A673 (cell line): ENCODE measurements at regions of chr2 and their contacts with region 1.

Region 1: DNA sequence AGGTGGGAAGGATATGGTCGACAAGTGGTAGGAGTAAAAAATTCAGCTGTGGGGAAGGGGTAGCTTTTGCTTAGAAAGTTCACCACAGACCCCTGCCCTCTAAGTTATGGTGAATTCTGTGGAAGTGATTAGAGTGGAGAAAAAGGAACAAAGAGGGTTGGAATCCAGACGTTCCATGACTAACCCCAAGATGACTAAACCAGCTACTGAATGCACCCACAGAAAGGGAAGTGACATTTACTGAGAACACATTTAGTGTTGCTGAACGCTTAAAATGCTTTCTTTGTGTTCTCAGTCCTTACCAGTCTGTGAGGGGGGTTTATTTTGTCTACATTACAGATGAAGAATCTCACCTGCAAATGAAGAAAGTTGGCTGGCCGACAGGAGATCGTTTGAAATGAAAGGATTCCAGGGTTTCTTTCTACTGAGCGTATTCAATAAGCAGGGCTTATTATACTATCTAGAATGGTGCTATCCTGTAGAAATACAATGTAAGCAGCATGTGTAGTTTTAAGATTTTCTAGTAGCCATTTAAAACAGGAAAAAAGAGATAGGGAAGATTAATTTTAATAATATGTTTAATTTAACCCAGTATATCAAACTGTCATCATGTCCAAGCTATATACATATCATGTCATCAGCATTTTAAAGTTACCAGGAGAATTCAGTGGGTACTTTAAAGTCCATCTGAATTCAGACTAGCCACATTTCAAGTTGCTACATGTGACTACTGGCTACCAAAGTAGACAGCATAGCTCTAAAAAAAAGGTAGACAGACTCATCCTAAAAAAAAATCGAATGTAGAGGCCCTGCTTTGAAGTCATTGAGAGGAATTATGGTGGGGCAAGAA is 60.1 kb downstream of the LIMS1 start:
- DNase-seq: peak; percentile 28
- H3K4me3 ChIP-seq: no peak overlapping the region
- H3K27ac ChIP-seq: no peak overlapping the region
- H3K4me1 ChIP-seq: peaks cover 18% of the 10 kb centered on the region
- H3K27me3 ChIP-seq: no peaks in the 10 kb centered on the region
- CTCF ChIP-seq: no peak

Region 2: GRCh38 chr2:108145557-108146326 is 448.6 kb before region 1 on chr2:
- CTCF ChIA-PET with region 1: no interaction called
- POLR2A ChIA-PET with region 1: no interaction called
- intact Hi-C with region 1: no loop called
- DNase-seq: peak; percentile 22
- H3K4me3 ChIP-seq: no peak overlapping the region
- H3K27ac ChIP-seq: no peak overlapping the region
- H3K4me1 ChIP-seq: no peaks in the 10 kb centered on the region
- H3K27me3 ChIP-seq: no peaks in the 10 kb centered on the region
- CTCF ChIP-seq: no peak

Region 3: GRCh38 chr2:108541451-108541850 is 52.9 kb before region 1 on chr2:
- CTCF ChIA-PET with region 1: interaction called, 13 read pairs
- POLR2A ChIA-PET with region 1: no interaction called
- intact Hi-C with region 1: no loop called
- DNase-seq: peak; percentile 74
- H3K4me3 ChIP-seq: no peak overlapping the region
- H3K27ac ChIP-seq: peak overlapping the region; percentile 10
- H3K4me1 ChIP-seq: peaks cover 21% of the 10 kb centered on the region
- H3K27me3 ChIP-seq: no peaks in the 10 kb centered on the region
- CTCF ChIP-seq: no peak

Region 4: DNA sequence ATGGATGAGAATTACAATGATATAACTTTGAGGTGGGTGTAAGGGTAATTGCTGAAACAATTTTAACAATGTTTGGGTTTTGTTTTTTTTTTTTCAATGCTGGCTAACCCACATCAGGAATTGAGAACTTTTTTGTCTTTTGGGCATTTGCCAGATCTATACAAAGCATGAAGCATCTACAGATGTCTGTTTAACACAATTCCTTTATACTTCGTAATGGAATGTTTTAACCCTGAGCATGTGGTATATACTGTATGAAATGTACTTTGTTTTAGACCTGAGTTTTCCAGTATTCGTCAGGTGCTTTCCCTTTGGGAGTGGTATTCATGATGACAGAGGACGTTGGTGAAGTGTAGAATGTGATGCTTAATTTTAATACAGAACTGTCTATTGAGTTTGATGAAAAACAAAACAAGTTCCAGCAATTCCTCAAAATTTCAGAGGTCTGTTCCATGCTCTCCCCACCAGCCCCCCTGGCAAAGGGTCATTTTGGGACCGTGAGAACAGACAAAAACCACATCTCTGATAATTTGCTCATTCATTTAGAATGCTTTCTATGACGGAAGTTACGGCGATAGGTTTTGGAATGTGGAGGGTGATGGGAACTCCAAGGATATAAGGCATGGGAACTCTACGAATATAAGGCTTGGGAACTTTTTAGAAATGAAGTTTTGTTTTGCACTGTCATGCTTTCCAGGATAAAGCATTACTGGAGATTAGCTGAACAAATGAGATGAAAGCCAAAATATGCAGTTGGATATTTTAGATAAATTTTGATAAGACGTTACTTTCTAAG is 46.0 kb before region 1 on chr2:
- CTCF ChIA-PET with region 1: no interaction called
- POLR2A ChIA-PET with region 1: interaction called, 17 read pairs
- intact Hi-C with region 1: no loop called
- DNase-seq: no peak
- H3K4me3 ChIP-seq: no peak overlapping the region
- H3K27ac ChIP-seq: no peak overlapping the region
- H3K4me1 ChIP-seq: no peaks in the 10 kb centered on the region
- H3K27me3 ChIP-seq: no peaks in the 10 kb centered on the region
- CTCF ChIP-seq: no peak

Region 5: DNA sequence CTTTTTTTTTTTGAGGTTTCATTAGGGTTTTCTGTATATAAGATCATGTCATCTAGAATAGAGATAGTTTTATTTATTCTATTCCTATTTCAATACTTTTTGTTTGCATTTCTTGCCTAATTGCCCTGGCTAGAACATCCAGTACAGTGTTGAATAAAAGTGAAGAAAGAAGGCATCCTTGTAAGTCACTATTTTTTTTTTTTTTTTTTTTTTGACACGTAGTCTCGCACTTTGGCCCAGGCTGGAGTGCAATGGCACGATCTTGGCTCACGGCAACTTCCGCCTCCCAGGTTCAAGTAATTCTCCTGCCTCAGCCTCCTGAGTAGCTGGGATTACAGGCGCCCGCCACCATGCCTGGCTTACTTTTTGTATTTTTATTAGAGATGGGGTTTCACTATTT is 97.1 kb after region 1 on chr2:
- CTCF ChIA-PET with region 1: no interaction called
- POLR2A ChIA-PET with region 1: no interaction called
- intact Hi-C with region 1: no loop called
- DNase-seq: no peak
- H3K4me3 ChIP-seq: no peak overlapping the region
- H3K27ac ChIP-seq: no peak overlapping the region
- H3K4me1 ChIP-seq: no peaks in the 10 kb centered on the region
- H3K27me3 ChIP-seq: no peaks in the 10 kb centered on the region
- CTCF ChIP-seq: no peak

Region 6: GRCh38 chr2:109062859-109063700 is 468.7 kb after region 1 on chr2:
- CTCF ChIA-PET with region 1: no interaction called
- POLR2A ChIA-PET with region 1: no interaction called
- intact Hi-C with region 1: no loop called
- DNase-seq: peak; percentile 19
- H3K4me3 ChIP-seq: no peak overlapping the region
- H3K27ac ChIP-seq: no peak overlapping the region
- H3K4me1 ChIP-seq: peaks cover 3% of the 10 kb centered on the region
- H3K27me3 ChIP-seq: peaks cover 9% of the 10 kb centered on the region
- CTCF ChIP-seq: no peak